ENCODE measurements at regions of chr17 and their contacts with region 1.

Region 1: DNA sequence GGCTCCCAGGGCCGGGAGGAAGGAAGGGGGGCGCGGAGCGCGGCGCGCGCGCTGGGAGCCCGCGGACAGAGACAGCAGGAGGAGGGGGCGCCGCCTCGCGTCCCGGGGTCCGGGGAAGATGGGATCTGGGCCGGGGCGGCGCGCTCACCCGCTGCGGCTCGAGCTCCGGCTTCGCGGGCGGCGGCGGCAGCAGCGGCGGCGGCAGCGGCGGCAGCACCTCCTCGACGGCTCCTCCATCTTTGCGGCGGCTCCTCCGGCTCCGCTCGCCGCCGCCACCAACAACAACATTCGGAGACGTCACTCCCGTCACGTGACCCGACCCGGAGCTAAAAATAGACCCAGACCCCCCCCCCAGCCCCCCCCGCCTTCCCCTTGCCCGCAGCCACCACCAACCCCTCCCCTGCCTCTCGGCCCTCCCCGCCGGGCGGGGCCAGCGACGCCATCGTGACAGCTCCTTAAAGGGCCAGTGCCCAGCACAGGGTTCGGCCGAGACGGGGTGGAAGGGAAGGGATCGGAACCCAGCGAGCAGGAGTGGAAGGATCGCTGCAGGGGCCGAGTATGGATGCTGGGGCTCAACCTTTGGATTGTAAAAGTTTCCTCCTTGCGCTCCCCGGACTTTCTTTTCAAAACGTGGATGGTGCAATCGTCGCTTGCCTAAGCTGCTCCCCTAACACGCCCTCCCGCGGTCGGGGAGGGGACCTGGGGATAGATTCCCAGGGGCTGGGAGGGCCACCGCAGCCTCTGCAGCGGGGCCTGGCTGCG is at the start of gene HDAC5:
- DNase-seq: peak; percentile 96
- ATAC-seq: peak; percentile 96
- H3K4me3 Mint-ChIP-seq: peak within 1 kb of the TSS; percentile 91
- H3K27ac Mint-ChIP-seq: peak within 1 kb of the TSS; percentile 97
- H3K4me1 Mint-ChIP-seq: peaks cover 18% of the 10 kb centered on the region
- H3K27me3 Mint-ChIP-seq: no peaks in the 10 kb centered on the region
- total RNA-seq, gene HDAC5: 25.5 to 32.5 TPM

Region 2: DNA sequence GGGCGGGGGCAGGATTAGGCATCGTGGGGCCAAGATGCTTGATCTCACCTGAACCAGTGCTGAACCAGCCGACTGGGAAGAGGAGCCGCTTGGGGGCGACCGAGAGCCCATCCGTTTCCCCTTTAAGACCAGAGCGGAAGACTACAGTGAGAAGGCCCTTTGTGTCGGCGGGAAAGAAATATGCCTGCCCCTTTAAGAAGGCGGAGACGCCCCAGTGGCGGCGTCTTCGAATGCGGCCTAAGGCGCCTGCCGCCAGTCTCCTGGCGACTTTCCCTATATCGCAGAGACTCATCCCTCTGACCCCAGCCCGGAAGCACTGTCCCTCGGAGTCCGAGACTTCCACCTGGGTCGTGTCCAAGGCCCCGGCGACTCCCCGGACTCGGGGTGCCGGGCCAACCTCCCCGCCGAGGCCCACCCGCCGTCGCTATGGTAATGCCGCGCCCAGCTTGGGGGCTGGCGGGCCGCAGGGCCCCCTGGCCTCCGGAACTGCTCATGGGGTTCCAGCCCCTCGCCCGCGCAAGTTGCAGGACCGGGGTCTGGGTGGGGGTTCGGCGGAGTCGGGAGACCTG is 18.3 kb after region 1 on chr17 and contains the start of gene HROB:
- CTCF ChIA-PET with region 1: interaction called, 17 read pairs
- DNase-seq: peak; percentile 98
- ATAC-seq: peak; percentile 93
- H3K4me3 Mint-ChIP-seq: peak within 1 kb of the TSS; percentile 87
- H3K27ac Mint-ChIP-seq: peak within 1 kb of the TSS; percentile 86
- H3K4me1 Mint-ChIP-seq: peaks cover 29% of the 10 kb centered on the region
- H3K27me3 Mint-ChIP-seq: no peaks in the 10 kb centered on the region
- total RNA-seq, gene HROB: 19.8 to 23.1 TPM

Measured in activated CD8-positive, alpha-beta memory T cell treated with anti-CD3 and anti-CD28 coated beads, Interleukin-2, amount 10 ng/mL, durations not matched to agents 7 days and 5 days (primary cell).